CD4-positive, alpha-beta T cell (primary cell): ENCODE measurements at regions of chr1 and their contacts with region 1.

Region 1: GRCh38 chr1:109620841-109621286 is 1.2 kb downstream of the AMPD2 start:
- DNase-seq: peak; percentile 91 to 99 (median 97)
- ATAC-seq: peak; percentile 86
- H3K4me3 ChIP-seq: peak overlapping the region; percentile 91
- H3K4me3 Mint-ChIP-seq: peak overlapping the region; percentile 99
- H3K27ac ChIP-seq: peak overlapping the region; percentile 85 to 95
- H3K27ac Mint-ChIP-seq: peak overlapping the region; percentile 89
- H3K4me1 ChIP-seq: peaks cover 80% of the 10 kb centered on the region
- H3K4me1 Mint-ChIP-seq: peaks cover 82% of the 10 kb centered on the region
- H3K27me3 ChIP-seq: no peaks in the 10 kb centered on the region
- H3K27me3 Mint-ChIP-seq: no peaks in the 10 kb centered on the region
- CTCF ChIP-seq: no peak

Region 2: DNA sequence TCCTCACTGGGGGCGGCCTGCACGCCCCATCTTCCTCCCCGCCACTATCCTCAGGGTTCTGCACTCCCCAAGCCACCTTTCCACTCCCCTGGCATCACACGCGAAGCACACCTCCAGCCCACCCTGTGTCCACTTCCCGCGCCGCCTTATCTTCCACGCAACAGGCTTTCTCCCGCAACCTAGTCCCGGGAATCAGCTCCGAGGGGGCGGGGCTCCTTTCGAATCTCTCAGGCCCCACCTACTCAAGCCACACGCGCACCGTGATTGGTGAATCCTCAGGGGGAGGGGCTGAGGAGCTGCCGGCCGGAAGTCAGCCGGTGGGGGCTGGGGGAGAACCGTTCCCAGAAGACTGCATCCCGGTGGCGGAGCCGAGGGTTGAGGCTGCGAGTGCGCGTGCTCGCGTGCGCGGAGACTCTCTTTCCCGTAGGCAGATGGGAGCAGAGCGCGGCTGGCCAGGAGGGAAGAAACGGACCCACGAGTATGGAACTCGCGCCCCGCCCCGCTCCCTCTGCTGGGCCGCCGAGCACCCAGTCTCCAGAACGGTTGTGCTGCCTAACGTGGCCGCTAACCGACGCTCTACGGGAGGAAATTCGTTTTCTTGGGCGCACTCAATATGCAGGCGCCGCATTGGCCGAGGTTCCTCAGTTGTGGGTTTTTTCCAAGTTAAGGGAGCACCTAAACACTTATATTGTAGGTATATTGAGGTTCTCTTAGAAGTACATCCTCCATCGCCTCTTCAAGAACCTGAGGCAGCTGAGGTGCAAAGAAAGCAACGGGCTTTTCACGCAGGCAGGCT is 337.7 kb before region 1 on chr1 and contains the start of gene PSRC1:
- CTCF ChIA-PET with region 1: no interaction called
- POLR2A ChIA-PET with region 1: no interaction called
- intact Hi-C with region 1: loop called in 1 of 2 experiments (anchors 5 kb)
- DNase-seq: peak; percentile 81 to 94 (median 85)
- ATAC-seq: peak; percentile 93
- H3K4me3 ChIP-seq: peak within 1 kb of the TSS; percentile 70
- H3K4me3 Mint-ChIP-seq: peak within 1 kb of the TSS; percentile 94
- H3K27ac ChIP-seq: peak within 1 kb of the TSS; percentile 31 to 59
- H3K27ac Mint-ChIP-seq: peak within 1 kb of the TSS; percentile 78
- H3K4me1 ChIP-seq: peaks cover 27% of the 10 kb centered on the region
- H3K4me1 Mint-ChIP-seq: peaks cover 19% of the 10 kb centered on the region
- H3K27me3 ChIP-seq: no peaks in the 10 kb centered on the region
- H3K27me3 Mint-ChIP-seq: no peaks in the 10 kb centered on the region
- CTCF ChIP-seq: peak; percentile 71
- total RNA-seq, gene PSRC1: 0.22 to 0.91 TPM

Region 3: GRCh38 chr1:109704173-109704572 is 83.3 kb after region 1 on chr1:
- CTCF ChIA-PET with region 1: no interaction called
- POLR2A ChIA-PET with region 1: no interaction called
- intact Hi-C with region 1: no loop called
- DNase-seq: peak in 1 of 14 experiments; percentile 1
- ATAC-seq: no peak
- H3K4me3 ChIP-seq: no peak overlapping the region
- H3K4me3 Mint-ChIP-seq: no peak overlapping the region
- H3K27ac ChIP-seq: no peak overlapping the region
- H3K27ac Mint-ChIP-seq: no peak overlapping the region
- H3K4me1 ChIP-seq: no peaks in the 10 kb centered on the region
- H3K4me1 Mint-ChIP-seq: no peaks in the 10 kb centered on the region
- H3K27me3 ChIP-seq: no peaks in the 10 kb centered on the region
- H3K27me3 Mint-ChIP-seq: no peaks in the 10 kb centered on the region
- CTCF ChIP-seq: no peak

Region 4: GRCh38 chr1:110254996-110255787 is 634.3 kb after region 1 on chr1:
- CTCF ChIA-PET with region 1: no interaction called
- POLR2A ChIA-PET with region 1: no interaction called
- intact Hi-C with region 1: no loop called
- DNase-seq: peak in 2 of 14 experiments; percentile 13 to 27
- ATAC-seq: no peak
- H3K4me3 ChIP-seq: no peak overlapping the region
- H3K4me3 Mint-ChIP-seq: no peak overlapping the region
- H3K27ac ChIP-seq: no peak overlapping the region
- H3K27ac Mint-ChIP-seq: no peak overlapping the region
- H3K4me1 ChIP-seq: peaks cover 4% of the 10 kb centered on the region
- H3K4me1 Mint-ChIP-seq: peaks cover 9% of the 10 kb centered on the region
- H3K27me3 ChIP-seq: no peaks in the 10 kb centered on the region
- H3K27me3 Mint-ChIP-seq: no peaks in the 10 kb centered on the region
- CTCF ChIP-seq: no peak